Calu3 (cell line): ENCODE measurements at regions of chr18 and their contacts with region 1.

Region 1: DNA sequence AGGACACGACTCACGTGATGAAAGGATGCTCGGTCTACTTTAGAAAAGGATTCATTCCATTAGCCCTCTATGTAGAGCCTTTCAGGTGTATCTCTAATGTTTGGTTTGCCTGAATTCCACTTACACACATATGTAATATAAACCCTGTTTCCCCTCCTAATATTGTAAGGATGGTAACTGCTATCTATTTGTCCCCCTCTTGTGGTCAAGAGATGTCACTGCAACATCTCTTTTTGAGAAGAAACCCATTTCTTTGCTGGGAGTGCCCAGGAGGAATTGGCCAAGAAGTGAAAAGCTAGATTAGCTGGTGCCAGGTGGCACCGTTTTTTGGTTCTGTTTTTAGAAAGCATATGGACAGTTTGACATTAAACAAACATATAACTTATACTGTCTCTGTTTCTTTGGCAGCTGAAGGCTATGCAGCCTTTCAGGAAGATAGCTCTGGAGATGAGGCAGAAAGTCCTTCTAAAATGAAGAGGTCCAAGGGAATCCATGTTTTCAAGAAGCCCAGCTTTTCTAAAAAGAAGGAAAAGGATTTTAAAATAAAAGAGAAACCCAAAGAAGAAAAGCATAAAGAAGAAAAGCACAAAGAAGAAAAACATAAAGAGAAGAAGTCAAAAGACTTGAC is 41.2 kb downstream of the RALBP1 start:
- DNase-seq: no peak
- H3K4me3 Mint-ChIP-seq: no peak overlapping the region
- H3K27ac Mint-ChIP-seq: no peak overlapping the region
- H3K4me1 Mint-ChIP-seq: peaks cover 26% of the 10 kb centered on the region
- H3K27me3 Mint-ChIP-seq: no peaks in the 10 kb centered on the region
- CTCF ChIP-seq: peak; percentile 80

Region 2: GRCh38 chr18:9366192-9366591 is 150.4 kb before region 1 on chr18:
- CTCF ChIA-PET with region 1: interaction called, 6 read pairs
- intact Hi-C with region 1: loop called (anchors 2 kb)
- DNase-seq: peak; percentile 69
- H3K4me3 Mint-ChIP-seq: no peak overlapping the region
- H3K27ac Mint-ChIP-seq: no peak overlapping the region
- H3K4me1 Mint-ChIP-seq: peaks cover 19% of the 10 kb centered on the region
- H3K27me3 Mint-ChIP-seq: no peaks in the 10 kb centered on the region
- CTCF ChIP-seq: peak; percentile 51

Region 3: GRCh38 chr18:9474983-9475642 is 41.4 kb before region 1 on chr18 and contains the start of gene RALBP1:
- CTCF ChIA-PET with region 1: no interaction called
- intact Hi-C with region 1: no loop called
- DNase-seq: peak; percentile 99
- H3K4me3 Mint-ChIP-seq: peak within 1 kb of the TSS; percentile 95
- H3K27ac Mint-ChIP-seq: peak within 1 kb of the TSS; percentile 87
- H3K4me1 Mint-ChIP-seq: peaks cover 32% of the 10 kb centered on the region
- H3K27me3 Mint-ChIP-seq: no peaks in the 10 kb centered on the region
- CTCF ChIP-seq: no peak
- total RNA-seq, gene RALBP1: 65.8 and 69.7 TPM in 2 replicates